HEK293 (cell line): ENCODE measurements at regions of chr19 and their contacts with region 1.

Region 1: GRCh38 chr19:5292822-5293611 is 47.6 kb downstream of the PTPRS start:
- H3K4me3 ChIP-seq: peak overlapping the region; percentile 67
- H3K27ac ChIP-seq: peak overlapping the region; percentile 81; the same call in 1 of the 2 replicates
- H3K4me1 ChIP-seq: peaks cover 2% of the 10 kb centered on the region; the same call in 1 of the 2 replicates
- CTCF ChIP-seq: 0 out of 2 replicates have a peak, but pooled peaks have one; percentile 15

Region 2: DNA sequence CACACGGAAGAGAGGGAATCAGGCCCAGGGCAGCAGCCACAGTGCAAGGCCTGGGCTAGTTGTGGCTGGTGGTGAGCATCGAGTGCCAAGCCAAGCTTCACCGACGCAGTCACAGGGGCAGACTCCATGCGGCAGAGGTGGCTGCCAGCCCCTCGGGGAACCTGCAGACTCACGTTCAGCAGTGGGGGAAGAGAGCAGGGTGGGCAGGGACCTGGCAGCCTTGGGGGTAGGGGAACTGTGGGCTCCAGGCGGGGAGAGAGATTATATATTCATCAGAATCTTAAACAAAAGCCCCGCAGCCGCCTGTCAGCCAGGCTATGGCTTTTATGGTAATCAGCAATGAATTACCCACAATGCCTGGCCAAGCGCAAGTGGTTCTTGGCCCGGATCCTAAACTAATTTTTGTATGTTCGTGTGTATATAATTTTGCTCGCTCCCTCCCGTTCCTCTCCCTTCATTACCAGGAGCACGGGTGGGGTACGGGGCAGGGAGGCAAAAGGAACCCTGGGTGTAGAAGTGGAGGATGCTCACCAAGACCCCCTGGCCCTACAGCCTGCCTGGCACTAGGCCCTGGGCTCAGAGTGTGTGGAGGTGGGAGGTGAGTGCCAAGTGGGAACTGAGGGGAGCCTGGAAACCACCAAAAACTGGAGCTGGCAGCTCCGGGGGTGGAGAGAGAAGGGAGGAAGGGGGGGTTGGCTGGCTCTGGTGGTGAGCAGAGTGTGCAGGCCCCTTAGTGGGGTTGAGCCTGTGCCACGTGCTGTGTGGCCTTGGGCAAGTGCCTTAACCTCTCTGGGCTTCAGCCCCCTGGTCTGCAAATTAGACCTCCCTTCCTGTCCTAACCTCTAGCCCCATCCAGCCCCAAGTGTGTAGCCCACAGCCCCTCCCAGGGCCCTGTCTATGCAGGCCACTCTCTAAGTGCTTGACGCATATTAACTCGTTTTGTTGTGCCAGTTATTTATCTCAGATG is 15.7 kb after region 1 on chr19:
- CTCF ChIA-PET with region 1: interaction called, 3 read pairs
- POLR2A ChIA-PET with region 1: interaction called, 11 read pairs
- H3K4me3 ChIP-seq: no peak overlapping the region
- H3K27ac ChIP-seq: peak overlapping the region; percentile 85
- H3K4me1 ChIP-seq: peaks cover 5% of the 10 kb centered on the region; the same call in 1 of the 2 replicates
- CTCF ChIP-seq: no peak

Region 3: DNA sequence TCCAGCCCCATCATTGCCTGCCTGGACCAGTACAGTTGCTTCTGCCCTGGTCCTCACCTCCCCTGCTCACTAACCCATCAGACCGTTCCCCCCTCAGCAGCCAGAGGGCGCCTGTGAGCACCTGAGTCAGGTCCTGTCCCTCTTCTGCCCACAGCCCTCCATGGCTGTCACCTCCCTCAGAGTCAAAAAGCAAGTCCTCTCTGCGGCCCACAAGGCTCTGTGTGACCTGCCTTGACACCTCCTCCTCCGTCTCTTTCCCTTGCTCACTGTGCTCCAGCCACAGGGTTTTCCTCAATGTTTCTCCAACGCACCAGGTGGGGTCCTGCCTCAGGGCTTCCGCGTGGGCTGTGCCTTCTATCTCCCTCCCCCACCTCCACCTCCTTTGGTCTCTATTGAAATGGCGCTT is 76.9 kb after region 1 on chr19:
- CTCF ChIA-PET with region 1: no interaction called
- POLR2A ChIA-PET with region 1: no interaction called
- H3K4me3 ChIP-seq: no peak overlapping the region
- H3K27ac ChIP-seq: no peak overlapping the region
- H3K4me1 ChIP-seq: no peaks in the 10 kb centered on the region
- CTCF ChIP-seq: peak; percentile 78